ENCODE measurements at regions of chr11 and their contacts with region 1.

Region 1: GRCh38 chr11:120505801-120506425 is 5.6 kb upstream of the GRIK4 start:
- DNase-seq: no peak
- H3K4me3 ChIP-seq: no peak overlapping the region
- H3K27ac ChIP-seq: no peak overlapping the region
- H3K4me1 ChIP-seq: no peaks in the 10 kb centered on the region
- H3K27me3 ChIP-seq: no peaks in the 10 kb centered on the region
- CTCF ChIP-seq: no peak
- EP300 ChIP-seq: no peak
- POLR2A ChIP-seq: no peak

Region 2: GRCh38 chr11:120959189-120959588 is 453.3 kb after region 1 on chr11:
- intact Hi-C with region 1: loop called in 3 of 4 experiments (anchors 2 to 10 kb)
- DNase-seq: no peak
- H3K4me3 ChIP-seq: no peak overlapping the region
- H3K27ac ChIP-seq: no peak overlapping the region
- H3K4me1 ChIP-seq: no peaks in the 10 kb centered on the region
- H3K27me3 ChIP-seq: no peaks in the 10 kb centered on the region
- CTCF ChIP-seq: no peak
- EP300 ChIP-seq: no peak
- POLR2A ChIP-seq: no peak